WTC11 (cell line): ENCODE measurements at regions of chr15 and their contacts with region 1.

Region 1: GRCh38 chr15:65434201-65434600 is 11.5 kb upstream of the IGDCC4 start:
- DNase-seq: no peak
- ATAC-seq: no peak
- H3K4me3 Mint-ChIP-seq: no peak overlapping the region
- H3K27ac Mint-ChIP-seq: no peak overlapping the region
- H3K4me1 Mint-ChIP-seq: no peaks in the 10 kb centered on the region
- H3K27me3 Mint-ChIP-seq: no peaks in the 10 kb centered on the region
- CTCF ChIP-seq: no peak

Region 2: GRCh38 chr15:65339920-65340549 is 94.2 kb before region 1 on chr15:
- CTCF ChIA-PET with region 1: no interaction called
- POLR2A ChIA-PET with region 1: no interaction called
- DNase-seq: no peak
- ATAC-seq: peak; percentile 41
- H3K4me3 Mint-ChIP-seq: no peak overlapping the region
- H3K27ac Mint-ChIP-seq: peak overlapping the region; percentile 48
- H3K4me1 Mint-ChIP-seq: peaks cover 57% of the 10 kb centered on the region
- H3K27me3 Mint-ChIP-seq: no peaks in the 10 kb centered on the region
- CTCF ChIP-seq: no peak

Region 3: DNA sequence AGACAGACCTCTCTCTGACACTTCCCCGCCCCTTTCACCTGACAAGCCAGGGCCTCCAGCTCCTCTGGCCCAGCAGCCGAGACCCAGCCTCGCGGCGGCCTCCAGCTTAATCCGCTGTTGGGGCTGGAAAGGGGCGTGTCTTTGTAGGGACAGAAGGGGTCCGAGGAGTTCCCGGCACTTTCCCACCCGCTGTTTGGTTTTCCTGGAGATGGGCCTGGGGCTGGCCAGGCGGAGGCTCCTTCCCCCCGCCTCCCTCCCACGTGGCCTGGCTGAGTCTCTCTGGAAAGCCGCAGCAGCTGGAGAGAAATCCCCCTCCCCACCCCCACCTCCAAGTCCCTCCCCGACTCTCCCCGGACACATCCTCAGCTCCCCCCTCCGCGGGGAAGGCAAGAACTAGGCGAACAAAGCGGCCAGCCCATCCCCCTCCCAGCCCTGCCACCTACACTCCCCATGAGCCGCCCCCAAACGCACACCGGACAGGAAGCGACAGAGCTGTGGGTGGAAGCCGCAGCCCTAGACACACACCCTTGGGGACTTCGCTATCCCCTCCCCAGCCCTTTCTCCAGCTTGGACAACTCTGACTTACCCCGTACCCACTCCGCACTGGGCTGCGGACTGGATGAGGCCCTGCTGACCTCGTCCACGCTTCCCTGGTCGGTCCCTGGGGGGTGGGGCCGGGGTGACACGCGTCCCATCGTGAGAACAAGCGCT is 12.7 kb before region 1 on chr15:
- CTCF ChIA-PET with region 1: interaction called, 15 read pairs
- POLR2A ChIA-PET with region 1: interaction called, 11 read pairs
- DNase-seq: peak; percentile 96
- ATAC-seq: peak; percentile 71
- H3K4me3 Mint-ChIP-seq: peak overlapping the region; percentile 98
- H3K27ac Mint-ChIP-seq: peak overlapping the region; percentile 93
- H3K4me1 Mint-ChIP-seq: peaks cover 77% of the 10 kb centered on the region
- H3K27me3 Mint-ChIP-seq: peaks cover 20% of the 10 kb centered on the region
- CTCF ChIP-seq: no peak

Region 4: DNA sequence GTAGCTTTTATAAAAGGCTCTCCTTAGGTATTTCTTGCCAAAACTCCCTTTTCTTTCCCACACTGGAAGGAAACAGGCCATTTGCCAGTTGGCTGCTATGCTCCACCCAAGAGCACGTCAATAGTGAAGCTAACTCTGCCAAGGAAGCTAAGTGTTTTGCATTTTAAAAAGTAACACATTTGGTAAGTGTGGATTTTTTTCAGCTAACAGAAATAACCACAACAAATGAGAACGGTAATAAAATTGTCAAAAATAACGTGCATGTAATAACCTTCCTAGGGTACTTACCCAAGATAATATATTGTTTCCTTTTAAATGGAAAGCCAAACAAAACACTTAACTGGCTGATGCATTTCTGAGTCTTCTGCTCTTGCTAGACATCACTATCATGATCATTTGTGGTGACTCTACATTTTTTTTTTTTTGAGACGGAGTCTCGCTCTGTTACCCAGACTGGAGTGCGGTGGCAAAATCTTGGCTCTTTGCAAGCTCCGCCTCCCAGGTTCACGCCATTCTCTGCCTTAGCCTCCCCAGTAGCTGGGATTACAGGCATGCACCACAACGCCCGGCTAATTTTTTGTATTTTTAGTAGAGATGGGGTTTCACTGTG is 78.7 kb after region 1 on chr15:
- CTCF ChIA-PET with region 1: no interaction called
- POLR2A ChIA-PET with region 1: no interaction called
- DNase-seq: no peak
- ATAC-seq: no peak
- H3K4me3 Mint-ChIP-seq: no peak overlapping the region
- H3K27ac Mint-ChIP-seq: no peak overlapping the region
- H3K4me1 Mint-ChIP-seq: peaks cover 11% of the 10 kb centered on the region
- H3K27me3 Mint-ChIP-seq: no peaks in the 10 kb centered on the region
- CTCF ChIP-seq: no peak